ENCODE measurements at regions of chr2 and their contacts with region 1.

Region 1: GRCh38 chr2:96760036-96760985 is at the start of gene CNNM4:
- DNase-seq: peak; percentile 95
- H3K4me3 Mint-ChIP-seq: peak within 1 kb of the TSS; percentile 79
- H3K27ac Mint-ChIP-seq: peak within 1 kb of the TSS; percentile 78
- H3K4me1 Mint-ChIP-seq: peaks cover 54% of the 10 kb centered on the region
- H3K27me3 Mint-ChIP-seq: no peaks in the 10 kb centered on the region
- total RNA-seq, gene CNNM4: 7.5 to 8.2 TPM

Region 2: GRCh38 chr2:96554293-96555145 is 205.8 kb before region 1 on chr2:
- CTCF ChIA-PET with region 1: interaction called, 8 read pairs
- POLR2A ChIA-PET with region 1: no interaction called
- intact Hi-C with region 1: loop called (anchors 5 kb)
- DNase-seq: peak; percentile 78
- H3K4me3 Mint-ChIP-seq: peak overlapping the region; percentile 43
- H3K27ac Mint-ChIP-seq: peak overlapping the region; percentile 77
- H3K4me1 Mint-ChIP-seq: peaks cover 41% of the 10 kb centered on the region
- H3K27me3 Mint-ChIP-seq: peaks cover 1% of the 10 kb centered on the region

Region 3: GRCh38 chr2:96702098-96702785 is 58.1 kb before region 1 on chr2:
- CTCF ChIA-PET with region 1: no interaction called
- POLR2A ChIA-PET with region 1: no interaction called
- intact Hi-C with region 1: no loop called
- DNase-seq: peak; percentile 0
- H3K4me3 Mint-ChIP-seq: no peak overlapping the region
- H3K27ac Mint-ChIP-seq: no peak overlapping the region
- H3K4me1 Mint-ChIP-seq: no peaks in the 10 kb centered on the region
- H3K27me3 Mint-ChIP-seq: no peaks in the 10 kb centered on the region

Region 4: GRCh38 chr2:96739633-96740428 is 20.5 kb before region 1 on chr2 and contains the start of gene LMAN2L:
- CTCF ChIA-PET with region 1: interaction called, 13 read pairs
- POLR2A ChIA-PET with region 1: interaction called, 4 read pairs
- intact Hi-C with region 1: loop called (anchors 1 kb)
- DNase-seq: peak; percentile 99
- H3K4me3 Mint-ChIP-seq: peak within 1 kb of the TSS; percentile 92
- H3K27ac Mint-ChIP-seq: peak within 1 kb of the TSS; percentile 52
- H3K4me1 Mint-ChIP-seq: peaks cover 35% of the 10 kb centered on the region
- H3K27me3 Mint-ChIP-seq: no peaks in the 10 kb centered on the region
- total RNA-seq, gene LMAN2L: 5.7 to 6.1 TPM

Region 5: GRCh38 chr2:96788442-96789244 is 28.3 kb after region 1 on chr2:
- CTCF ChIA-PET with region 1: interaction called, 10 read pairs
- POLR2A ChIA-PET with region 1: no interaction called
- intact Hi-C with region 1: no loop called
- DNase-seq: no peak
- H3K4me3 Mint-ChIP-seq: no peak overlapping the region
- H3K27ac Mint-ChIP-seq: no peak overlapping the region
- H3K4me1 Mint-ChIP-seq: peaks cover 4% of the 10 kb centered on the region
- H3K27me3 Mint-ChIP-seq: no peaks in the 10 kb centered on the region

Region 6: DNA sequence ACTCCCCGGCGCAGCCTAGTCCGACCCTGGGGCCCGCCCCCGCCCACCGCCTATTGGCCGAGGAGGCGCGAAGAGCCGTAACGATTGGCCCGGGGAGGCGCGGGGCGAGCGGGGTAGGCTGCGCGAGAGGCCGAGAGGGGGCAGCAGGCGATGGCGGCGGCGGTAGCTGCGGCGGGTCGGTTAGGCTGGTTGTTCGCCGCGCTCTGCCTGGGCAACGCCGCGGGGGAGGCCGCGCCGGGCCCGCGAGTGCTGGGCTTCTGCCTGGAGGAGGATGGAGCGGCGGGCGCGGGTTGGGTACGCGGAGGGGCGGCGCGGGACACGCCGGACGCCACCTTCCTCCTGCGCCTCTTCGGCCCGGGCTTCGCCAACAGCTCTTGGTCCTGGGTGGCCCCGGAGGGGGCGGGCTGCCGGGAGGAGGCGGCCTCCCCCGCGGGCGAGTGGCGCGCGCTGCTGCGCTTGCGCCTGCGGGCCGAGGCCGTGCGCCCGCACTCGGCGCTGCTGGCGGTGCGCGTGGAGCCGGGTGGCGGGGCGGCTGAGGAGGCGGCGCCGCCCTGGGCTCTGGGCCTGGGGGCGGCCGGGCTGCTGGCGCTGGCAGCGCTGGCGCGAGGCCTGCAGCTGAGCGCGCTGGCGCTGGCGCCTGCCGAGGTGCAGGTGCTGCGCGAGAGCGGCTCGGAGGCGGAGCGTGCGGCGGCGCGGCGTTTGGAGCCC is 56.0 kb after region 1 on chr2 and contains the start of gene CNNM3:
- CTCF ChIA-PET with region 1: interaction called, 8 read pairs
- POLR2A ChIA-PET with region 1: interaction called, 4 read pairs
- intact Hi-C with region 1: loop called (anchors 5 kb)
- DNase-seq: peak; percentile 97
- H3K4me3 Mint-ChIP-seq: peak within 1 kb of the TSS; percentile 82
- H3K27ac Mint-ChIP-seq: peak within 1 kb of the TSS; percentile 77
- H3K4me1 Mint-ChIP-seq: peaks cover 60% of the 10 kb centered on the region
- H3K27me3 Mint-ChIP-seq: no peaks in the 10 kb centered on the region
- total RNA-seq, gene CNNM3: 16.3 to 22.2 TPM

Measured in activated CD4-positive, alpha-beta memory T cell treated with anti-CD3 and anti-CD28 coated beads for 36 hours (primary cell).